Adrenal gland (tissue), 19 donors: ENCODE measurements at regions of chr10 and their contacts with region 1.

Region 1: DNA sequence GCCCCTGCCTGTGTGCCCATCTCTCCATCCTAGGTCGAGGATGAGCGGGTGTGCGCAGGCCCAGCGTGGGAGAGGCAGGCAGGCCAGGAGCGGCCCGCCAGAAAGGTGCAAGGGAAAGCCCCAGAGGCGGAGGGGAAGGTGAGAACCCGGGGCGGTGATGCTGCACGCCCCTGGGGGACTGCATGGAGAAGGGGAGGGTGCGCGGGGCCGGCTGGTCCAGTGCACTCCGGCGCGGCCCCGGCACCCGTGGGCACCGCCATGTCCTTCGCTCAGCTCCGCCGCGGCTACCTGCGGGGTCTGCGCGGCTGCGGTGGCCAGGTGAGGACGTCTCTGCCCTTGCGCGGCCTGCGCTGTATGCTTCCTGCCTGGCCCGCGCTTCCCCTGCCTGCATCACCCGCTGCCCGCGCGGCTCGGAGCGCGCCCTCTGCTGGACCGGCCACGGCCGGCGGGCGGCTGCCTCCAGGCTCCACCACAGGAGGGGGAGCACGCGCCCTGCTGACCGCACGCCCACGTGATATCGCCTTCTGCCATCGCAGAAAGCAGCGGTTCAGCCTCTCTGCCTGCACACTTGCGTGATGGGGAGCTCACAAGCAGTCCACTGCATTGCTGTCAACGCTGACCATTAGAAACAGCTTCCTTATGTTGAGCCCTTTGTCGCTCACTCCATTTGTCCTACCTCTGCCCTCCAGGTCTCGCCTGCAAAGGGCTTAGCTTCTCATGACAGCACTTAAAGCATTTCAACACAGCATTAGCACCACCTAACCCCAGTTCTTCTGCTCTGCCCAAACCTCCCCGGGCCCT is 73.9 kb downstream of the CXCL12 start:
- DNase-seq: peak; percentile 79 to 89 (median 85)
- H3K4me3 ChIP-seq: peak overlapping the region in 1 of 4 donors; percentile 27
- H3K27ac ChIP-seq: no peak overlapping the region
- H3K4me1 ChIP-seq: no peaks in the 10 kb centered on the region
- H3K27me3 ChIP-seq: peaks cover 4% of the 10 kb centered on the region
- CTCF ChIP-seq: peak; percentile 56 to 98 (median 82)
- POLR2A ChIP-seq: no peak

Region 2: DNA sequence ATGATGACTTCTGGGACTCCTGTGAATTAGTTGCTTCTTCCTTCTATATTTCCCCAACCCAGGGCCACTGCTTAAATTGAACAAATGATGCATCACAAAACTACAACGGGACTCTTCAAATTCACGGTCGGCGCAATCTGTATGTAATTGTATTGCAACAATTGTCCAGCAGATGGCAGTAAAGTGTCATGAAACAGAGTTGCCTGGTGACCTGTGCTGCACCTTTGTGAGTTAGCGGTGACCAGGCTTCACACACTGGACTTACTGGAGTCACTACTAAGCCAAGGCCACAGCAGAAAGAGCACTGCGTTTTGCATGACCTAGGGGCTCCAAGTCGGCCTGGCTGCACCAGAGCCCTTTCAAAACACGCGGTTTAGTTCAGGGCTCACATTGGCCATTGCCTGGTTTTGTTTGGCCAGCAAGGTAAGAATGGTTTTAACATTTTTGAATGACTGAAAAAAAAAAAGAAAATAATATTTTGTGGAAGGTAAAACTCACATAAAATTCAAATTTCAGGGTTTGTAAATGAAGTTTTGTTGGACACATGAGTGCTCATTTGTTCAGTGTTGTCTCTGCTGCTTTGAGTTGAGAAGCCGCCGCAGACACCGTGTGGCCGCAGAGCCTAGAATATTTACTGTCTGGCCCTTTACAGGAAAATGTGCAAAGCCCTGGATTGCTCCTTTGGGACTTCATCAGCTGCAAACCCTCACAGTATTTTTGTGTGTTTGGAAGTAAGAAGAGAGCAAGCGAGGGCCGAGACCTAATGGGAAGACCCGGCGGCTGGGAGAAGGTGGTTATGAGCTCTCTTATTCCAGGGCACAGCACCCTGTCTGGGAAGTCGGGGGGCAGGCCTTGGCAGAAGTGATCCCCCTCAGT is 639.1 kb before region 1 on chr10:
- intact Hi-C with region 1: loop called in 1 of 2 experiments (anchors 5 kb)
- DNase-seq: peak; percentile 45 to 75 (median 61)
- H3K4me3 ChIP-seq: no peak overlapping the region
- H3K27ac ChIP-seq: no peak overlapping the region
- H3K4me1 ChIP-seq: peaks cover 0 to 3% of the 10 kb centered on the region in 2 donors
- H3K27me3 ChIP-seq: peaks cover 16% of the 10 kb centered on the region
- CTCF ChIP-seq: peak; percentile 77 to 92 (median 84)
- POLR2A ChIP-seq: no peak

Region 3: DNA sequence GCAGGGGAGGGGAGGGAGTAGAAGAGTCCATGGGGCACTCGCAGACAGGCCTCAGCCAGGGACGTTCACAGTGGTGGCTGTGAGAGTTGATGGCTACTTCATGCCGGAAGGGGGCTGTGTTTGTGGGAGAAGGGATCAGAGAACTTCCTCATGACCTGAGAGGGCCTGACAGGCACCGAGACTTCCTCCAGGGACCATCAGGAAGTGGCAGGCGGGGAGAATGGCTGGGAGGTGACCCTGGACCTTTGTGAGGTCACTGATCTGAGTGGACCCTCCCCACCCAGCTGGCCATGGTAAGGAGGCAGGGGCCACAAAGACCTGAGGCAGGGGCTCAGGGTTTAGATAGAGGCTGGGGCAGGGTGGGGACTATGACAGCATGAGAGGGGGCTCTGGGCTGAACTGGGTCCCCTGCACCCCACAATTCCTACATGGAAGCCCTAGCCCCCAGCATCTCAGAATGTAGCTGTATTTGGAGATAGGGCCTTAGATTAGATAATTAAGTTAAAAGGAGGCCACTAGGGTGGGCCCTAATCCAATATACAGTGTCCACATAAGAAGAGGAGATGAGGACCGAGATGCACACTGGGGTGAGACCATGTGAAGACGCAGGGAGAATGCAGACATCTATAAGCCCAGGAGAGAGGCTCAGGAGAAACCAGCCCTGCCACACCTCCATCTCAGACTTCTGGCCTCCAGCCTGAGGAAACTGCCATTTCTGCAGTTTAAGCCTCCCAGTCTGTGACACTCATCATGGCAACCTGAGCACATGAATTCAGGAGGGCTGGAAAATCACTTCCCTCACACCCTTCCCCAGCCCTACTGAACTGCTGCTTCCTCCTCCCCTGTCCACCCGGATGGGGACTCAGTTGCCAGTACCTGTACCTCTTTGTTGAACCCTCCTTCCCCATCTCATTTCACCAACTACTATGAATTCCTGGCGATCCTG is 388.4 kb before region 1 on chr10:
- intact Hi-C with region 1: loop called in 1 of 2 experiments (anchors 10 kb)
- DNase-seq: peak in 2 of 7 donors; percentile 28 to 37
- H3K4me3 ChIP-seq: no peak overlapping the region
- H3K27ac ChIP-seq: no peak overlapping the region
- H3K4me1 ChIP-seq: no peaks in the 10 kb centered on the region
- H3K27me3 ChIP-seq: no peaks in the 10 kb centered on the region
- CTCF ChIP-seq: peak in 3 of 6 experiments; percentile 25 to 33 (median 25)
- POLR2A ChIP-seq: no peak

Region 4: DNA sequence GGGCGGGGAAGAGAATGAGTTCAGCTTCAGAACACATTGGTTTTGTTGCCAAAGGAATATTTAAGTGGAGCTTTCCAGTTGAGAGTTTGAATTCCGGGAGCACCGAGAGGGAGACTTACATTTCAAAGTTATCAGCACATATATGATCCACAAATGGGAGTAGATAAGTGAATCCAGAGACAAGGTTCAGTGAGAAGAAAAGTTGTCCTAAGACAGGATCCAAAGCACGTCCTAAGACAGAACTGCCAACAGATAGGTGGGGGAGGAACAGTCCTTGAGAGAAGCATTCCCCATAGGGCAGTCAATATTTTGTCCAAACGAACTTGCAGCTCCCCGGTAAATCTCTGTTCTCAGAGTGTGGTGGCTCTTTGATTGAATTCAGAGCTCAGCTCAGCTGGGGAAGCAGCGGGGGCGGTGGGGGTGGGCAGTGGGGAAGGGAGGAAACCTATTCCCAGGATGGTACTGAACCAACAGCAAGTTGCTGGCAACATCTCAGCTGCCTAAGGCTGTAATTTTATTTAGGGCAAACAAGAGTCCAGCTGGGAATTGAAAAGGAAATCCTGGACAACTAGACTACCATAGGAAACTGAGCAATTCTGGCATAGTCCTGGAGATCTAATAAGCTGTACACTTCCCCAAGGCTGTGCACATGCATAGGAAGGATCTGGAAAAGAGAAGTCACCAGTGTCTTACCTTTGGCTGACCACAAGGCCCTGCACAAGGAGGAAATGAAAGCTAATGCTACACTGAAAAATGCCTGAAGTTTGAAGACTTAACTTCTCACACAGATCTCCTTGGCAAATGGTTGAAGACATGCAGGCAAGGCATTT is 168.1 kb after region 1 on chr10:
- intact Hi-C with region 1: no loop called
- DNase-seq: no peak
- H3K4me3 ChIP-seq: no peak overlapping the region
- H3K27ac ChIP-seq: no peak overlapping the region
- H3K4me1 ChIP-seq: no peaks in the 10 kb centered on the region
- H3K27me3 ChIP-seq: no peaks in the 10 kb centered on the region
- CTCF ChIP-seq: no peak
- POLR2A ChIP-seq: no peak